Cardiac septum (tissue), 1 donor: ENCODE measurements at regions of chr1 and their contacts with region 1.

Region 1: GRCh38 chr1:19582302-19582701 is 61.8 kb upstream of the NBL1 start:
- DNase-seq: peak; percentile 79

Region 2: GRCh38 chr1:19390901-19391595 is 191.3 kb before region 1 on chr1:
- intact Hi-C with region 1: loop called (anchors 5 kb)
- DNase-seq: no peak

Region 3: DNA sequence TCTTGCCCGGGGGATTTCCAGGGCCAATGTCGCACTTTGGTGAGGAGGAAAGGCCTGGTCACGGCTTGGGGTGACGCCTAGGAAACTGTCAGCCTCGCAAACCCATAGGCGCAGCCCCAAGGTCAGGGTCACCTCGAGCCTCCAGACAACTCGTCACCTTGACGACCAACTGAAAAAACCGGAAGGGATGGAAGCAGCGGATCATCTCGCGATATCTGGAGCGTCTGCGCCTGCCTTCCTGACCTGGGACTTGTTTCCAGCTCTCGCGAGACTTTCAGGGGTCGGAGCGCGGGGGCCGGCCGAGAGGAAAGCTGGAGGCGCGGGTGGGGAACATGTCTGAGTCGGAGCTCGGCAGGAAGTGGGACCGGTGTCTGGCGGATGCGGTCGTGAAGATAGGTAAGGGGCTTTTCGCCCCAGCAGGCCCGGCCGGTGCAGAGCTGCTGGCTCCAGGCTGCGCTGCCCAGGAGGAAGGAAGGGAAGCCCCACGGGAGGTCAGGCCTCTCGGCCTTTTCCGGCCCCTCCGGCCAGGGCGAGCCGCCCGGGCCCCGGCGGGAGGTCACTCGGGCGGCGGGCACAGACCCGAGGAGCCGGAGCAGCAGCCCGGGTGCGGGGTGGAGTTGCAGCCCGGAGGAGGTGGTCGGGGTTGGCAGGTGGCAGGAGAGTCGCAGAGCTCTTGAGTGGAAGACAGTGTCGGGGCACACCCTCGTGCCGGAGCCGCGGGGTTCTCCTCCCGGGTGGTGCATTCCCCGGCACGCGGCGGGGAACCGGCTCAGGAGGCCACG is 14.6 kb after region 1 on chr1:
- intact Hi-C with region 1: no loop called
- DNase-seq: peak; percentile 97